ENCODE measurements at regions of chr4 and their contacts with region 1.

Region 1: GRCh38 chr4:83455281-83456129 is at the starts of genes HELQ and MRPS18C:
- DNase-seq: peak; percentile 97
- total RNA-seq, gene HELQ: 11.1 TPM
- total RNA-seq, gene MRPS18C: 39.1 TPM

Region 2: DNA sequence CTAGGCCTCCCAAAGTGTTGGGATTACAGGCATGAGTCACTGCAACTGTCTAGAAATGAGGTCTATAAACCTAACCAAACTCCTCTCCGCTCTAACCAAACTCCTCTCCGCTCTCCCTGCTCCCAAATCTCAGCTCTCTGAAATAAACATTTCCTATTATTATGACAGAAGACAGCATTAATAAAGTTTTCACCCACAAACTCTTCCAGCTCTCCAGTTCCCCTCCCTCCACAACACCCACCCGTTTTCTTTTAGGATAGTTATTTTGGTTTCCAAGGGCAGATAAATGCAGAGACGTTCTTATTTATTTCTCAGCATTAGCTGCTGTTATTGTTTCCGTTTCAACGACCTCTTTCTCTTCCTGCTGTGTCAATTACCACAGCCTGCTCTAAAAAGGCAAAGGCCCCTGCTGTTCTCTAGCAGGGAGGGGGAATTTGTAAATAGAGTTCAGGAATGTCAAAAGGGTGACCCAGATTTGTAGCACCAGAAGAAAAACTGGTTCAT is 643.6 kb before region 1 on chr4:
- intact Hi-C with region 1: no loop called
- DNase-seq: no peak

Region 3: GRCh38 chr4:82900331-82901128 is 555.0 kb before region 1 on chr4 and contains the start of gene THAP9:
- intact Hi-C with region 1: loop called (anchors 10 kb)
- DNase-seq: peak; percentile 100
- total RNA-seq, gene THAP9: 6.0 TPM

Region 4: GRCh38 chr4:83284193-83285054 is 171.1 kb before region 1 on chr4 and contains the start of gene COQ2:
- intact Hi-C with region 1: loop called (anchors 5 kb)
- DNase-seq: peak; percentile 98
- total RNA-seq, gene COQ2: 13.1 TPM

Region 5: GRCh38 chr4:83484500-83485461 is 29.3 kb after region 1 on chr4 and contains the start of gene ABRAXAS1:
- intact Hi-C with region 1: loop called (anchors 2 kb)
- DNase-seq: peak; percentile 97
- total RNA-seq, gene ABRAXAS1: 6.4 TPM

Region 6: GRCh38 chr4:83708500-83709175 is 253.1 kb after region 1 on chr4:
- intact Hi-C with region 1: no loop called
- DNase-seq: no peak